ENCODE measurements at regions of chr17 and their contacts with region 1.

Region 1: DNA sequence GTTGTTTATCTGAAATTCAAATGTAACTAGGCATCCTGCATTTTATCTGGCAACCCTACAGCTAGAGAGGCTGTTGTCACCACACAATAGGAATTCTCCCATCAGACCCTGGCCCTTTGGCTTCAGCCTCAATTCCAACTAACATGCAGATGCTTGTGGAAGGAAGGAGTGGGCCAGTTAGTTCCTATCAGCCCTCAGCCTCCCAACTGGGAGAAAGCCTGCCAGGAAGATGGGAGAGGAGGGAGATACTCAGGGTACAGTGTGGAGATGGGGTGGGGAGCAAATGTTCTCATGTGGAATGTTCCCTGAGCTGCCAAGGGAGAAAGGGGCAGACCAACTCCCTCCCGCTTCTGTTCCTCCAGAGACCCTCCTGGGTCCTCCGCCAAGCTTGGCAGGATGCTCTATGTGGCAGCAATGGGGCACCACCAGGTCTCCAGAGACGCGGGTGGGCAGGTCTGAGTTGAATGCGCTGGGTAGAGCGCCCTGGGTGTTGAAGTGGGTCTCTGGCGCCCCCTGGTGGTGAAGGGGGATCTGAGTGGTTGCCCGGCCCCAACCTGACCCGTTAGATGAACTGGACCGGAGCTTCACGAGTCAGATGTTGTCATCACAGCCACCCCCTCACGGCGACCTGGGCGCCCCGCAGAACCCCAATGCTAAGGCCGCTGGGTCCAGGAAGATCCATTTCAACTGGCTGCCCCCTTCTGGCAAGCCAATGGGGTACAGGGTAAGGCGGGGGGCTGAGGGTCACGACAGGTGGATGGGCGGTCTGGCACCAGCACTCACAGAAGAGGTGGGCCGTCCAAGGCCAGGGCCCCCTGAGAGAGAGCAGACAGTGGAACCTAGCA is 15.2 kb downstream of the GALK1 start:
- DNase-seq: peak; percentile 54 to 98
- H3K4me3 ChIP-seq: no peak overlapping the region
- H3K27ac ChIP-seq: no peak overlapping the region
- H3K4me1 ChIP-seq: peaks cover 0 to 5% (median 2%) of the 10 kb centered on the region in 4 experiments; a peak in 4 of 7 replicates
- H3K27me3 ChIP-seq: peaks cover 0 to 2% (median 0%) of the 10 kb centered on the region in 4 experiments; a peak in 1 of 7 replicates
- CTCF ChIP-seq: peak; percentile 81 to 92 (median 87)
- EP300 ChIP-seq: no peak
- POLR2A ChIP-seq: no peak
- RAD21 ChIP-seq: peak; percentile 76 to 81

Region 2: DNA sequence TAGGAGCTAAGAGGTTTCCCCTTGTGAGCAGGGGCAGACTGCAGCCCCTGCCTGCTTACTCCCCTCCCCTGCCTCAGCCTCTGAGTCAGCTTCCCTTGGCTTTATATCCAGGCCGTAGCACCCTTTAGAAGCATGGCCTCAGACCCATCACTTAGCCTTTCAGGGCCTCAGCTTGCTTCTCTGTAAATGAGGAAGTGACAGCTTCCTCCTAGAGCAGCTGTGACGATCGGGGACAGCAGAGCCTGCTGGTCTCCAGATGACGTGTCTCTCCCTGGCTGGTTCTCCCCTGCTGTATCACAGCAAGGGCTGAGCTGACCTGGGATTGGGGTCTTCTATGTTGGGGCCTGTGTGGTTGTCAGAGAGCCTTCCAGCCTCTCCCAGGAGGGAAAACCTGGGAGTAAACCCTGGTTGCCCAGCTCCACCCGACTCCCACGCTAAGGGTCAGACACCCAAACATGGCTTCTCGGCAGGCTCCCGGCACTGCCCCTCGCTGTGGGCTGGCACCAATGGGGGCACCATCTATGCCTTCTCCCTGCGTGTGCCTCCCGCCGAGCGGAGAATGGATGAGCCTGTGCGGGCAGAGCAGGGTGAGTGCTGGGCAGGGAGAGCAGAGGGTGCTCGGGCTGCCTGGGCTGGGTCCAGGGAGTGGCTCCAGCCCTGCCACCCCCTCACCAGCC is 178.4 kb before region 1 on chr17:
- CTCF ChIA-PET with region 1: no interaction called
- POLR2A ChIA-PET with region 1: no interaction called
- DNase-seq: no peak
- H3K4me3 ChIP-seq: no peak overlapping the region
- H3K27ac ChIP-seq: no peak overlapping the region
- H3K4me1 ChIP-seq: no peaks in the 10 kb centered on the region
- H3K27me3 ChIP-seq: no peaks in the 10 kb centered on the region
- CTCF ChIP-seq: no peak
- EP300 ChIP-seq: no peak
- POLR2A ChIP-seq: no peak
- RAD21 ChIP-seq: no peak

Region 3: GRCh38 chr17:75614006-75614405 is 135.8 kb before region 1 on chr17:
- CTCF ChIA-PET with region 1: interaction called, 49 read pairs
- POLR2A ChIA-PET with region 1: no interaction called
- DNase-seq: no peak
- H3K4me3 ChIP-seq: no peak overlapping the region
- H3K27ac ChIP-seq: no peak overlapping the region
- H3K4me1 ChIP-seq: no peaks in the 10 kb centered on the region
- H3K27me3 ChIP-seq: no peaks in the 10 kb centered on the region
- CTCF ChIP-seq: peak; percentile 55 to 64 (median 59)
- EP300 ChIP-seq: no peak
- POLR2A ChIP-seq: no peak
- RAD21 ChIP-seq: peak; percentile 31 to 47; a peak in 3 of 4 replicates

Region 4: GRCh38 chr17:75632863-75633485 is 116.8 kb before region 1 on chr17 and contains the start of gene SMIM5:
- CTCF ChIA-PET with region 1: interaction called, 312 read pairs
- POLR2A ChIA-PET with region 1: interaction called, 5 read pairs
- DNase-seq: peak; percentile 75 to 97
- H3K4me3 ChIP-seq: peak within 1 kb of the TSS in 1 of 4 experiments; percentile 16; a peak in 3 of 8 replicates
- H3K27ac ChIP-seq: no peak within 1 kb of the TSS
- H3K4me1 ChIP-seq: peaks cover 0 to 16% (median 11%) of the 10 kb centered on the region in 4 experiments; a peak in 5 of 7 replicates
- H3K27me3 ChIP-seq: no peaks in the 10 kb centered on the region
- CTCF ChIP-seq: peak; percentile 93 to 95 (median 94)
- EP300 ChIP-seq: no peak
- POLR2A ChIP-seq: no peak
- RAD21 ChIP-seq: peak; percentile 58 to 70
- total RNA-seq, gene SMIM5: not detected in 2 replicates

Region 5: GRCh38 chr17:75679706-75680442 is 69.9 kb before region 1 on chr17:
- CTCF ChIA-PET with region 1: interaction called, 115 read pairs
- POLR2A ChIA-PET with region 1: interaction called, 4 read pairs
- DNase-seq: no peak
- H3K4me3 ChIP-seq: no peak overlapping the region
- H3K27ac ChIP-seq: no peak overlapping the region
- H3K4me1 ChIP-seq: no peaks in the 10 kb centered on the region
- H3K27me3 ChIP-seq: no peaks in the 10 kb centered on the region
- CTCF ChIP-seq: no peak
- EP300 ChIP-seq: no peak
- POLR2A ChIP-seq: no peak
- RAD21 ChIP-seq: no peak

Region 6: GRCh38 chr17:75707131-75707571 is 42.6 kb before region 1 on chr17:
- CTCF ChIA-PET with region 1: interaction called, 87 read pairs
- POLR2A ChIA-PET with region 1: interaction called, 3 read pairs
- DNase-seq: no peak
- H3K4me3 ChIP-seq: no peak overlapping the region
- H3K27ac ChIP-seq: no peak overlapping the region
- H3K4me1 ChIP-seq: no peaks in the 10 kb centered on the region
- H3K27me3 ChIP-seq: no peaks in the 10 kb centered on the region
- CTCF ChIP-seq: no peak
- EP300 ChIP-seq: no peak
- POLR2A ChIP-seq: no peak
- RAD21 ChIP-seq: no peak

Region 7: DNA sequence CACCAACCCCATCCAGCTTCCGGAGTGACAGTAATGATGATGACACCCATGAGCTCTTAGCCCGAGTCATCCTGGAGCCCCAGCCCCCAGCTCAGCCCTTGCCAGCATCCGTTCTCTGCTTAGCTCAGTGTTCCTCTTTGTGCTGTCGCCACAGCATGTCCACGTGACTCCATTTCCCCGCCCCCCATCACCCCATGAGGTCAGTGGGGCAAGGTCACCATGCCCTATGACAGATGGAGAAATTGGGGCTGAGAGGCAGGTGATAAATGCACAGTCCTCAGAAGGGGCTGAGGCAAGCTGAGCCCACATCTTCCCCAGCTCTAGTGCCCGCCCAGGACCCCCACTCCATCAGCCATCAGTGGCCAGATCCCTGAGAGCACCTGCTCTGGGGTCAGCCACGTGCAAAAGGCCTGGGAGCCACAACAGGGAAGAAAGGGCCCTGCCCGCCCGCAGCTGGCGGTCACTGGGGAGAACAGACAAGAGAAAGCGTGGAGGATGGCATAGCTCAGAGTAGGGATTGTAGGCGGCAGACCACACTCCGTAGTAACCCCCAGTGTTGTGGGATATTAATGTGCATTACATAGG is 11.5 kb before region 1 on chr17:
- CTCF ChIA-PET with region 1: interaction called, 98 read pairs
- POLR2A ChIA-PET with region 1: interaction called, 4 read pairs
- DNase-seq: no peak
- H3K4me3 ChIP-seq: no peak overlapping the region
- H3K27ac ChIP-seq: no peak overlapping the region
- H3K4me1 ChIP-seq: no peaks in the 10 kb centered on the region
- H3K27me3 ChIP-seq: no peaks in the 10 kb centered on the region
- CTCF ChIP-seq: no peak
- EP300 ChIP-seq: no peak
- POLR2A ChIP-seq: no peak
- RAD21 ChIP-seq: no peak

Region 8: GRCh38 chr17:75784473-75785015 is 34.8 kb after region 1 on chr17 and contains the start of gene UNK:
- CTCF ChIA-PET with region 1: interaction called, 359 read pairs
- POLR2A ChIA-PET with region 1: interaction called, 425 read pairs
- DNase-seq: peak; percentile 97 to 99
- H3K4me3 ChIP-seq: peak within 1 kb of the TSS; percentile 73 to 97 (median 92)
- H3K27ac ChIP-seq: peak within 1 kb of the TSS; percentile 100
- H3K4me1 ChIP-seq: peaks cover 0 to 20% (median 7%) of the 10 kb centered on the region in 4 experiments; a peak in 6 of 7 replicates
- H3K27me3 ChIP-seq: no peaks in the 10 kb centered on the region
- CTCF ChIP-seq: no peak
- EP300 ChIP-seq: no peak
- POLR2A ChIP-seq: peak in 1 of 2 experiments; percentile 89; a peak in 2 of 3 replicates
- RAD21 ChIP-seq: no peak
- total RNA-seq, gene UNK: 33.0 and 33.3 TPM in 2 replicates

Measured in H1 (cell line).